Ovary (tissue), 10 donors: ENCODE measurements at regions of chr4 and their contacts with region 1.

Region 1: GRCh38 chr4:88075336-88075735 is 67.9 kb downstream of the PKD2 start:
- DNase-seq: no peak
- H3K4me3 ChIP-seq: no peak overlapping the region
- H3K27ac ChIP-seq: no peak overlapping the region
- H3K4me1 ChIP-seq: peaks cover 2% of the 10 kb centered on the region
- H3K27me3 ChIP-seq: no peaks in the 10 kb centered on the region
- CTCF ChIP-seq: no peak
- EP300 ChIP-seq: no peak
- POLR2A ChIP-seq: no peak

Region 2: DNA sequence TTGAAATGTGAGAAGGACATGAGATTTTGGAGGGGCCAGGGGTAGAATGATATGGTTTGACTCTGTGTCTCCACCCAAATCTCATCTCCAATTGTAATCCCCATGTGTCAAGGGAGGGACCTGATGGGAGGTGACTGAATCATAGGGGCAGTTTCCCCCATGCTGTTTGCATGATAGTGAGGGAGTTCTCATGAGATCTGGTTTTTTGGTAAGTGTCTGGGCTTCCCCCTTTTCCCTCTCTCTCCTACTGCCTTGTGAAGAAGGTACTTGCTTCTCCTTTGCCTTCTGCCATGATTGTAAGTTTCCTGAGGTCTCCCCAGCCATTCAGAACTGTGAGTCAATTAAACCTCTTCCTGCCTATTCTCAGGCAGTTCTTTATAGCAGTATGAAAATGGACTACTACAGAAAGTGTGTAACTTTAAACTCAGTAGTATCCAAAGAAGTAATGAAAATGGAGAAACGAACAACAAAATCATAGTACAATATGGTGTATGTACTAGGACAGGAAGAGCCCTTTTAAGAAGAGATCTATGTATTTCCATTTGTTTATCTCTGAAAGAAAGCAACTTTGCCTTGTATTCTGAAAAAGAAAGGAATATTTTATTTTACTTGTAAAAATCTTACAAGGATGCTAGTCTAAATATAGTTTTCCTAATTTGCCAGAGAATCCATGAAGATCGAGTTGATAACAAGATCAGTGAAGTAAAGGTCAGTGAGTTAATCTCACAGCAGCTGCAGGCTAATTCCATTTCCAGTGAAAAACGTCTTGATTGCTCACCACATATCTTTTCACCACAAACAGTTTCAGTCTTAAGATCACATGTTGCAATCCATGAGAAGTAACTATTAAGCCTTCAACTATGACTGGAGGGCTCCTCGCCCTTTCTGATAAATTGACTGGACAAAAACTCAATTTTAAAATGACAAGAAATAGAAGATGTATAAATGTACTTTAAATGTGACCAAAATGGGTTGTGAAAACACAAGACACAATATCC is 47.4 kb before region 1 on chr4:
- intact Hi-C with region 1: loop called in 1 of 4 experiments (anchors 2 kb)
- DNase-seq: no peak
- H3K4me3 ChIP-seq: no peak overlapping the region
- H3K27ac ChIP-seq: no peak overlapping the region
- H3K4me1 ChIP-seq: no peaks in the 10 kb centered on the region
- H3K27me3 ChIP-seq: no peaks in the 10 kb centered on the region
- CTCF ChIP-seq: no peak
- EP300 ChIP-seq: no peak
- POLR2A ChIP-seq: no peak

Region 3: DNA sequence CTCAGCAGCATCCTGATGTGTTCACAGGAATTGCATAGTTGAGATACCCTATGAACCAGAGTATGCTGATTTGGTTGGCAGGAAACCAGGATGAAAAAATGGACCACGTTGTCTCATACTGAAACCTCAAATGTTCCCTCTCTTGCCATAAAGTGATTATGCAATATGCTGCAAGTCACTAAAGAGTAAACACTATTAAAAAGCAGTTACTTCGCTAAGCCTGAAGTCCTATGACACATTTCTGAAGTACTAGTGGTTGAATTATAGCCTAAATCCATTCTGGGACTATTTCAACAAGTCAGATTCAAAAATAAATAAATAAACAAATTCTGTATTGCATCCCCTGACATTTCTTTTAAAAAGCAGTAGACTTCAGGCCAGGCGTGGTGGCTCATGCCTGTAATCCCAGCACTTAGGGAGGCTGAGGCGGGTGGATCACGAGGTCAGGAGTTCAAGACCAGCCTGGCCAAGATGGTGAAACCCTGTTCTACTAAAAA is 728.3 kb after region 1 on chr4:
- intact Hi-C with region 1: no loop called
- DNase-seq: peak in 2 of 5 donors; percentile 17 to 53
- H3K4me3 ChIP-seq: no peak overlapping the region
- H3K27ac ChIP-seq: no peak overlapping the region
- H3K4me1 ChIP-seq: peaks cover 4% of the 10 kb centered on the region
- H3K27me3 ChIP-seq: no peaks in the 10 kb centered on the region
- CTCF ChIP-seq: no peak
- EP300 ChIP-seq: no peak
- POLR2A ChIP-seq: no peak